Naive thymus-derived CD4-positive, alpha-beta T cell (primary cell): ENCODE measurements at regions of chr15 and their contacts with region 1.

Region 1: DNA sequence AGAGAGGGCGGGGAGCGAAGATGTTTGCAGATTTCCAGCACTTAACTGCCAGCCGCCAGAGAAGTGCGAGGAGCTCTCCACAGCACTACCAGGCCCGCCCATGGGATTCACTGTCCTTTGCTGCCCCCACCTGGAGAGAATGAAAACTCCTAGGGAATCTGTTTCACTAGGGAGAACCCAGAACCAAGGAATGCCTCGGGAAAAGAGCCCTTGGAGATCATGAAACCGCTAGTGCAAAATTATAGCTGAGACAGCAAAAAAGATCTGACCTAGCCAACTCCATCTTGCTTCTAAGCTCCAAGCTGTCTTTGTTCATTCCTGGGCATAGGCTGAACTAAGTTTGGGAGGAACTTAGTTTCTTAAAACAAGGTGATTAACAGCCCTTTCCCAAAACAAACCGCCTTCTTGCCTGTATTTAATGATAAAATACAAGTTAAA is 82.6 kb upstream of the GCNT3 start:
- DNase-seq: peak; percentile 44 to 74 (median 65)
- ATAC-seq: peak; percentile 89
- H3K4me3 ChIP-seq: no peak overlapping the region
- H3K4me3 Mint-ChIP-seq: no peak overlapping the region
- H3K27ac ChIP-seq: no peak overlapping the region
- H3K27ac Mint-ChIP-seq: peak overlapping the region in 5 of 9 donors; percentile 2 to 48 (median 22)
- H3K4me1 ChIP-seq: peaks cover 0 to 8% of the 10 kb centered on the region in 2 donors
- H3K4me1 Mint-ChIP-seq: peaks cover 14 to 28% (median 20%) of the 10 kb centered on the region in 7 donors
- H3K27me3 ChIP-seq: no peaks in the 10 kb centered on the region
- H3K27me3 Mint-ChIP-seq: peaks cover 0 to 15% (median 0%) of the 10 kb centered on the region in 5 donors

Region 2: GRCh38 chr15:58957101-58957973 is 571.6 kb before region 1 on chr15:
- CTCF ChIA-PET with region 1: interaction called, 6 read pairs
- POLR2A ChIA-PET with region 1: no interaction called
- intact Hi-C with region 1: loop called (anchors 1 to 10 kb)
- DNase-seq: peak in 8 of 9 donors; percentile 37 to 69 (median 63)
- ATAC-seq: peak; percentile 99
- H3K4me3 ChIP-seq: no peak overlapping the region
- H3K4me3 Mint-ChIP-seq: peak overlapping the region in 1 of 10 donors; percentile 39
- H3K27ac ChIP-seq: no peak overlapping the region
- H3K27ac Mint-ChIP-seq: no peak overlapping the region
- H3K4me1 ChIP-seq: no peaks in the 10 kb centered on the region
- H3K4me1 Mint-ChIP-seq: peaks cover 0 to 14% (median 8%) of the 10 kb centered on the region in 7 donors
- H3K27me3 ChIP-seq: peaks cover 0 to 3% of the 10 kb centered on the region in 2 donors
- H3K27me3 Mint-ChIP-seq: peaks cover 0 to 11% (median 0%) of the 10 kb centered on the region in 5 donors

Region 3: DNA sequence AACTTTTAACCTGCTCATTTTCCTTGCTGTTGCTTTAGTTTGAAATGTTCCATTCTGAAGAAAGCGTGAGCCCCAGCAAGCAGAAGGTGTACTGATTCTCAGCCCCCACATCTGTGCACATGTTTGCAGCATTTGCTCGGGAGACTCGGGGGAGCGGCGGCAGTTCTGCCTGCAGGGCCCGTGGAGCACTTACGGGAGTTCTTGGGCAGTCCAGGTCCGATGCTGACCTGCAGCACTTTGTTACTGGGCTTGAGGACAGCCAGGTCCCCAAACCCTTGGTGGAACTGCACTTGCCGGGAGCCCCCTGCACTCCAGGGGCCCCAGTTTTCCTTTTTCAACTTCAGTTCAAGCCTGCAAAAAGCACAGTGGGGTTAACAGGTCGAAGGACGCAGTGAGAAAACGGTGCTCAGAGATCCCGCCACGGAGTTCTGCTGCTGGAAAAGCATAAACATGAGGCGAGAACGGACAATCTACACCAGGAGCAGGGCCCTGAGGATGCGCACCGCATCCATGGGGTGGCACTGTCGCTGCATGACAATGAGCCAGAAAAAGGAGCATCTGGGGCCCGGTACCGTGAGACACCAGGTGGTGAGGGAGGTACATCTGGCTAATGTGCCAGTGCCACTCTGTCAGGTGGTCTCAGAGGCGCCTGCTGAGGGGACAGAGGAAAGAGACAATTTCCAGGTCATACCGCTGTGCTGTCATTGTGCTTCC is 367.9 kb before region 1 on chr15:
- CTCF ChIA-PET with region 1: no interaction called
- POLR2A ChIA-PET with region 1: no interaction called
- intact Hi-C with region 1: loop called in 1 of 2 experiments (anchors 5 kb)
- DNase-seq: peak in 3 of 9 donors; percentile 6 to 21 (median 10)
- ATAC-seq: no peak
- H3K4me3 ChIP-seq: no peak overlapping the region
- H3K4me3 Mint-ChIP-seq: no peak overlapping the region
- H3K27ac ChIP-seq: no peak overlapping the region
- H3K27ac Mint-ChIP-seq: no peak overlapping the region
- H3K4me1 ChIP-seq: no peaks in the 10 kb centered on the region
- H3K4me1 Mint-ChIP-seq: peaks cover 0 to 8% (median 0%) of the 10 kb centered on the region in 7 donors
- H3K27me3 ChIP-seq: no peaks in the 10 kb centered on the region
- H3K27me3 Mint-ChIP-seq: no peaks in the 10 kb centered on the region

Region 4: GRCh38 chr15:59492389-59493377 is 36.3 kb before region 1 on chr15:
- CTCF ChIA-PET with region 1: interaction called, 27 read pairs
- POLR2A ChIA-PET with region 1: no interaction called
- intact Hi-C with region 1: loop called in 1 of 2 experiments (anchors 1 kb)
- DNase-seq: peak; percentile 12 to 63 (median 49)
- ATAC-seq: peak; percentile 85
- H3K4me3 ChIP-seq: no peak overlapping the region
- H3K4me3 Mint-ChIP-seq: peak overlapping the region in 1 of 10 donors; percentile 26
- H3K27ac ChIP-seq: no peak overlapping the region
- H3K27ac Mint-ChIP-seq: peak overlapping the region in 1 of 9 donors; percentile 2
- H3K4me1 ChIP-seq: no peaks in the 10 kb centered on the region
- H3K4me1 Mint-ChIP-seq: peaks cover 0 to 5% (median 4%) of the 10 kb centered on the region in 7 donors
- H3K27me3 ChIP-seq: no peaks in the 10 kb centered on the region
- H3K27me3 Mint-ChIP-seq: peaks cover 0 to 28% (median 3%) of the 10 kb centered on the region in 5 donors

Region 5: DNA sequence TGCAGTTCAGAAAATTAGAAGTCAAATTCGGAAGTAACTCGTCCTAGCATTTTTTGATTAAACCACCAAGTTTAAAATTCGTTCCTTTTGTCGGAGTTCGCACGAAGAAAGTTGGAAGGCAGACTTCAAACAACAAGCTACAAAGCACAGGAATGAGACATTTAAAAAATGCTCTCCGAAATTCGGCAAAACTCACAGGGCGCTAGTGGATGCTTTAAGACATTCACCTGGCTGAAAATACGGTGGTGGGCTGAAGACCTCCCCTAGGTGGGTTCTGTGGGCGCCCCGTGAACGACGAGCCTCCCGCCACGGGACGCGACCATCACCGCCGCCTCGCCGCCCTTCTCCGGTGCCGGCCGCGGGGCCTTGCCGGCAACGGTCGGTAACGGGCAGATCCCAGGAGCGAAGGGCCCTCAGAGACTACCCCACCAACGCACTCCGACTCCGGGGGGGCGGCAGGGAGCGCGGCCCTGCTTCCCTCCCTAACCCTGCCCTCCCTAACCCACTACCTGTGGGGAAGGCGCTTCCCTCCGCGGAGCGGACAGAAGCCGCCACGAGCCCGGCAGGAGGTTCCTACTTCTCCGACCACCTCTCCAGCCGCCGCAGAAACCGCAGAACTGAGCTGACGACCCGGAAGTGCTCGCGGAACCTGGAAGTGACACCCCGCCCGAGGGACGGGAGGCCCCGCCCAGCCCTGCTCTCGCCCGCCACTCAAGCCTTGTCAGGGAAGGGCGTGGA is 128.1 kb after region 1 on chr15 and contains the start of gene GTF2A2:
- CTCF ChIA-PET with region 1: no interaction called
- POLR2A ChIA-PET with region 1: no interaction called
- intact Hi-C with region 1: loop called in 1 of 2 experiments (anchors 1 kb)
- DNase-seq: peak; percentile 81 to 95 (median 89)
- ATAC-seq: peak; percentile 99
- H3K4me3 ChIP-seq: peak within 1 kb of the TSS; percentile 77
- H3K4me3 Mint-ChIP-seq: peak within 1 kb of the TSS in 7 of 10 donors; percentile 18 to 52 (median 26)
- H3K27ac ChIP-seq: peak within 1 kb of the TSS; percentile 89
- H3K27ac Mint-ChIP-seq: peak within 1 kb of the TSS in 4 of 9 donors; percentile 76 to 88 (median 78)
- H3K4me1 ChIP-seq: peaks cover 18% of the 10 kb centered on the region in 2 donors
- H3K4me1 Mint-ChIP-seq: peaks cover 4 to 17% (median 11%) of the 10 kb centered on the region in 7 donors
- H3K27me3 ChIP-seq: no peaks in the 10 kb centered on the region
- H3K27me3 Mint-ChIP-seq: no peaks in the 10 kb centered on the region
- total RNA-seq, gene GTF2A2: 46.6 to 124 (median 50.1) TPM